ENCODE measurements at regions of chr2 and their contacts with region 1.

Region 1: DNA sequence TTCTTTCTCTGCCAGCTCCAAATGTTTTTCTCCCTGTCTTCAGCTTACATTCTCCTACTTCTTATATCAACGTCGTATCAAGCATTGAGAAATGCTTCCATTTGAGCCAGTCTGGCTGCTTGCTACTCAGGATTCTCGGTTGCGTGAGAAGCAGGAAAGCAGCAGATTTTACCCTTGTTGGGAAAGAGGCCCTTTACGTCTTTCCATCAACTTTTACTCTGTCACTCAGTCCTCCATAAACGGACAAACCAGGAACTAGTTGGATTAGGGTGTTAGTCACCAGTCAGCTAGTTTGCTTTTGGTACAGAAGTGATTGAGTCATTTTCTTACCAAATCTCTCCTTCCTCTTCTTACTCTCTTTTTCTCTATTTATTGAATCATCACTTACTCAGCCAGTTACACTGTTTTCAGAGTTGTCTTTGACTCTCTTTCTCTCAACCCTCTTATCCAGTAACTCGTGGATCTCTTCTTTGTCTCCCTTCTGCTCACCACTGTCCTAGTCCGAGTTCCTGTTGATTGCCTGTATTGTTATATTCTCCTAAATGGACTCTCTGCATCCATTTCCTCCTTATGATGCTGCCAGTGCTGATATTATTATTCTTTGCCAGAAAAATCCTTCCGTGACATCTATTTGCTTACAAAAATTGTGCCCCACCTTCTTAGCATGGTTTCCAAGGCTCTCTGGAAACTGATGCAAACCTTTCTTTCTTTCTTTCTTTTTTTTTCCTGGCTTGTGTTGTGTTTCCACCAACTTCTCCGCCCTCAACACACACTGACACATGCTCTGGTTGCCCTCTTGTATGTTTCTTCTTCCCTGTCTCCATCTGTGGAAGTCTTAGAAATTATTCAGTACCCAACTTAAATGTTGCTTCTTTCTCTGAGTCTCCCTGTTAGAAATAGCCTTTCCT is 61.5 kb downstream of the VRK2 start:
- DNase-seq: peak; percentile 83
- ATAC-seq: peak; percentile 65
- H3K4me3 ChIP-seq: peak overlapping the region; percentile 6 to 44; a peak in 3 of 4 replicates
- H3K27ac ChIP-seq: peak overlapping the region; percentile 56
- H3K4me1 ChIP-seq: peaks cover 25 to 72% of the 10 kb centered on the region in 2 experiments
- H3K27me3 ChIP-seq: no peaks in the 10 kb centered on the region
- CTCF ChIP-seq: no peak
- POLR2A ChIP-seq: no peak
- RAD21 ChIP-seq: peak; percentile 20

Region 2: GRCh38 chr2:58046585-58047372 is 61.3 kb before region 1 on chr2 and contains the start of gene VRK2:
- CTCF ChIA-PET with region 1: no interaction called
- POLR2A ChIA-PET with region 1: interaction called, 6 read pairs
- RAD21 ChIA-PET with region 1: no interaction called
- intact Hi-C with region 1: loop called (anchors 2 kb)
- DNase-seq: peak; percentile 90
- ATAC-seq: peak; percentile 91
- H3K4me3 ChIP-seq: peak within 1 kb of the TSS; percentile 70 to 71
- H3K27ac ChIP-seq: peak within 1 kb of the TSS; percentile 92
- H3K4me1 ChIP-seq: peaks cover 30 to 51% of the 10 kb centered on the region in 2 experiments
- H3K27me3 ChIP-seq: no peaks in the 10 kb centered on the region
- CTCF ChIP-seq: no peak
- POLR2A ChIP-seq: no peak
- RAD21 ChIP-seq: peak; percentile 34; the same call in 1 of the 2 replicates
- total RNA-seq, gene VRK2: 33.0 TPM

Region 3: GRCh38 chr2:58163913-58164312 is 55.9 kb after region 1 on chr2:
- CTCF ChIA-PET with region 1: no interaction called
- POLR2A ChIA-PET with region 1: no interaction called
- RAD21 ChIA-PET with region 1: no interaction called
- intact Hi-C with region 1: no loop called
- DNase-seq: no peak
- ATAC-seq: no peak
- H3K4me3 ChIP-seq: no peak overlapping the region
- H3K27ac ChIP-seq: no peak overlapping the region
- H3K4me1 ChIP-seq: no peaks in the 10 kb centered on the region
- H3K27me3 ChIP-seq: no peaks in the 10 kb centered on the region
- CTCF ChIP-seq: no peak
- POLR2A ChIP-seq: no peak
- RAD21 ChIP-seq: no peak

Region 4: GRCh38 chr2:58553937-58554336 is 445.9 kb after region 1 on chr2:
- CTCF ChIA-PET with region 1: no interaction called
- POLR2A ChIA-PET with region 1: no interaction called
- RAD21 ChIA-PET with region 1: no interaction called
- intact Hi-C with region 1: no loop called
- DNase-seq: peak; percentile 7
- ATAC-seq: peak; percentile 72
- H3K4me3 ChIP-seq: no peak overlapping the region
- H3K27ac ChIP-seq: no peak overlapping the region
- H3K4me1 ChIP-seq: no peaks in the 10 kb centered on the region
- H3K27me3 ChIP-seq: no peaks in the 10 kb centered on the region
- CTCF ChIP-seq: peak; percentile 35 to 56 (median 53); a peak in 5 of 6 replicates
- POLR2A ChIP-seq: no peak
- RAD21 ChIP-seq: peak; percentile 54